RWPE1 (cell line): ENCODE measurements at regions of chr17 and their contacts with region 1.

Region 1: DNA sequence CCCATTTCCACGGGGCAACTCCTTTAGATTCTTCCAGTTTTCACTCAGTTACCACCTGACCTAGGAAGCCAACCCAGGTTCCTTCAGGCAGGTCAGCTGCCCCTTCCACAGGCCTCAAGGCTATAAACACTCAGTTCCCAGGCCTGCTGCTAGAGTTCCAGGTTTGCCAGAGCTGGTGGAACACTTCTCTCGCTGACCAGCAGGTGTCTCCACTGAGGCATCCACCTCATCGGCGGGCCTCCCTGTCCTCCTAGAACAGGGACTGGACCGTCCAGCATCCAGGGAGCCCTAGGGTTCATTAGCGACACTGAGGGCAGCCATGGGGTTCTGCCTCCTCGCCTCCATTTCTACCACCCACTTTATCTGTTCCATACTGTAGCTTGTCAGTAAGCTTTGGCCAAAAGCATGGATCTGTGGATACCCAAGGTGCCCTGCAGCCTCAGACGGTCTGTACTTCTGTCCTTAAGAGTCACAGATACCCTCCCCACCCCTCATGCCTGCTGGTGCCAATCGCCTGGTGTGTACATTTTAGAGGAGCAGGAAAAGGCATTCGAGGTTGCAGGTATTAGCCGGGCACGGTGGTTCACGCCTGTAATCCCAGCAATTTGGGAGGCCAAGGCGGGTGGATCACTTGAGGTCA is 29.0 kb downstream of the PIMREG start:
- DNase-seq: peak; percentile 81
- H3K27ac ChIP-seq: peak overlapping the region; percentile 81
- CTCF ChIP-seq: peak; percentile 95

Region 2: DNA sequence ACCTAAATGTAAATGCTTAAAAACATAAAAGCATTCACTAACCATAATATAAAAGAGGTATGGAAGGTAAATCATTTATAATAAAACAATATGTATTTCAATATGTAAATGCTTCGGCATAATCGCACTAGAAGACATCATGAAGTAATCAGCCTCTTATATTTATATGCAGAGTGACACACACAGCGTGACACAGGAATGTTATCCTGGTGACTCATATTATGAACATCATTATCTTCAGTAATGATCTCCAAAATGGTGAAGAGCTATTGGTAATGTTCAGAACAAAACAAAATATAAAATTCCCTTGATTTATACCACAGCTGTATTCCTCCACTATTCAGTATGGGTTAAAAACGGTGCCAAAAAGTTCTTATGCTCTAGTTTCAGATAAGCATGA is 92.2 kb before region 1 on chr17:
- CTCF ChIA-PET with region 1: no interaction called
- POLR2A ChIA-PET with region 1: no interaction called
- DNase-seq: peak; percentile 39
- H3K27ac ChIP-seq: no peak overlapping the region
- CTCF ChIP-seq: no peak

Region 3: DNA sequence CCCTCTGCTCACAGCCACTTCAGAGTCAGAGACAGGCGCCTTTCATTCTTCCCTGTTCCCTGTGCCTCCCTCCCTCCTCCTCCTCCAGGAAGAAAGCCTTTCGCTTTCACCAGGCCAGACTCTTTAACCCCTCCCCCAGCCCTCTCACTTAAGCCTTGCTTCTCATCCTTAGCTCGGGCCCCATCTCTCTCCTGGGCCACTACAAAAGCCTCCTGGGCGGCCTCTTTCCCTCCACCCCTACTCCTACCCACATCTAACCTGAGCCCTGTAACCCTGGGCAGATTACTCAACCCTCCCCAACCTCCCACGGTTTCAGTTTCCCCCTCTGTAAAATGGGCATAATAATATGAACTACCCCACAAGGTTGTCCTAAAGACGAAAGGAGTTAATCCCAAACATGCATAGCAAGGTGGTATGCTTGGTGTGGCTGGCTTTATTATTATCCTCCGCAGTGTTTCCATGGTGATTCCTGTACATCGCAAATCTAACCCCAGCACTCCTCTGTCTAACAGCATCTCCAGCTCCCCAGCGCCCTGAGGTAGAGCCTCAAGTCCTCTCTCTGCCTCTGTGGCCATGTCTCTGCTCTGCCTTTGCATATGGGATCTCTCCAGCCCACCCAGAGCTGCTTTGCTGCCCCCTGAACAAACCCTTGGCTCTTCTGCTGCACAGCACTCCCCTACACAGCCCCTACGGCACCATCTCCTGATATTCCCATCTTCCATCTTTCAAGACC is 11.3 kb before region 1 on chr17:
- CTCF ChIA-PET with region 1: interaction called, 10 read pairs
- POLR2A ChIA-PET with region 1: no interaction called
- DNase-seq: no peak
- H3K27ac ChIP-seq: peak overlapping the region; percentile 2
- CTCF ChIP-seq: no peak

Region 4: DNA sequence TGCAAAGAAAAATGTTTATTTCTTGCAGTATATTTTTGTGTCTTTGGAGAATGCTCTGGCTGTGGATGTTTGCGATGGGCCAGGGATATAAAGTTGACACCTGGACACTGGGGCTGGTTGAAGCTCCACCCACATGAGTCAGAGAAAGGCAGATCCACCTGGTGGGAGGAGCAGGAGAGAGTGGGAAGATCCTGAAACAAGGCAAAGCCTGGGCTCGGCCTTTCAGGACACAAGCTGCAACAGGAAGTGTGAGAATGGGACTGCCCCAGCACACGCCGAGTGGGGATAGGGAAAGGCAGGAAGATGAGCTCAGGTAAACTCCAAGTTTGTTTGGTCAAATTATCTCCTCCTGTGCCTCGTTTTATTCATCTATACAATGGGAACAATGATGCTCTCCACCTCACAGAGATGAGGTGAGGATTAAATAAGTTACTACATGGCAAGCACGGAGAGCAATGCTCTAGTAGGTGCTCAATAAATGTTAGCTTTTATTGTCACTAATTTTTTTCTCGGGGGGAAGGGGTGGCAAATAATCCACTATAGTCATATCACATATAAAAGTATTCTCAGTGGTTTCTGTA is 104.5 kb after region 1 on chr17:
- CTCF ChIA-PET with region 1: interaction called, 21 read pairs
- POLR2A ChIA-PET with region 1: no interaction called
- DNase-seq: peak; percentile 94
- H3K27ac ChIP-seq: peak overlapping the region; percentile 51
- CTCF ChIP-seq: no peak